SK-N-SH (cell line): ENCODE measurements at regions of chr15 and their contacts with region 1.

Region 1: GRCh38 chr15:79989682-79990081 is 18.7 kb upstream of the BCL2A1 start:
- DNase-seq: no peak
- H3K4me3 ChIP-seq: no peak overlapping the region
- H3K27ac ChIP-seq: no peak overlapping the region
- H3K4me1 ChIP-seq: no peaks in the 10 kb centered on the region; a peak in 1 of 4 replicates
- H3K27me3 ChIP-seq: no peaks in the 10 kb centered on the region; the same call in 1 of the 2 replicates
- CTCF ChIP-seq: no peak
- EP300 ChIP-seq: no peak
- RAD21 ChIP-seq: no peak

Region 2: DNA sequence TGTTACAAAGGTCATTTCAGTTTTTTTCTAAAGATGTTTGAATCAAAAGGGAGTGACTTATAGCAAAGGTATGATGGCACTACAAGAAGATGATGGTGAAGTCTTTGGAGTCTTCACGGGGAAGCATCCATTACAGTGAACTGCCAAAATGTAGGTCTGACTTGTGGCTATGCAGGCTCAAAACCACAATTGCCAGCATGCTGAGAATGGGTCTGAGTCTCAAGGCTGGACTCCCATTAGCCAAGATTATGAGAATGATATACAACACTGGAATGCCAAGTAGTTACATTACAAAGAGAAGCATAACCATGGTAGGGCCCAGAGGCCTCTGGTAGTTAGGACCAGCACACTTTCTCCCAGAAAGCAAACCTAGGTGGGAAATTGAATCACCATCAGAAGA is 287.1 kb before region 1 on chr15:
- CTCF ChIA-PET with region 1: no interaction called
- POLR2A ChIA-PET with region 1: no interaction called
- DNase-seq: no peak
- H3K4me3 ChIP-seq: no peak overlapping the region
- H3K27ac ChIP-seq: no peak overlapping the region
- H3K4me1 ChIP-seq: no peaks in the 10 kb centered on the region
- H3K27me3 ChIP-seq: no peaks in the 10 kb centered on the region
- CTCF ChIP-seq: no peak
- EP300 ChIP-seq: no peak
- RAD21 ChIP-seq: no peak

Region 3: DNA sequence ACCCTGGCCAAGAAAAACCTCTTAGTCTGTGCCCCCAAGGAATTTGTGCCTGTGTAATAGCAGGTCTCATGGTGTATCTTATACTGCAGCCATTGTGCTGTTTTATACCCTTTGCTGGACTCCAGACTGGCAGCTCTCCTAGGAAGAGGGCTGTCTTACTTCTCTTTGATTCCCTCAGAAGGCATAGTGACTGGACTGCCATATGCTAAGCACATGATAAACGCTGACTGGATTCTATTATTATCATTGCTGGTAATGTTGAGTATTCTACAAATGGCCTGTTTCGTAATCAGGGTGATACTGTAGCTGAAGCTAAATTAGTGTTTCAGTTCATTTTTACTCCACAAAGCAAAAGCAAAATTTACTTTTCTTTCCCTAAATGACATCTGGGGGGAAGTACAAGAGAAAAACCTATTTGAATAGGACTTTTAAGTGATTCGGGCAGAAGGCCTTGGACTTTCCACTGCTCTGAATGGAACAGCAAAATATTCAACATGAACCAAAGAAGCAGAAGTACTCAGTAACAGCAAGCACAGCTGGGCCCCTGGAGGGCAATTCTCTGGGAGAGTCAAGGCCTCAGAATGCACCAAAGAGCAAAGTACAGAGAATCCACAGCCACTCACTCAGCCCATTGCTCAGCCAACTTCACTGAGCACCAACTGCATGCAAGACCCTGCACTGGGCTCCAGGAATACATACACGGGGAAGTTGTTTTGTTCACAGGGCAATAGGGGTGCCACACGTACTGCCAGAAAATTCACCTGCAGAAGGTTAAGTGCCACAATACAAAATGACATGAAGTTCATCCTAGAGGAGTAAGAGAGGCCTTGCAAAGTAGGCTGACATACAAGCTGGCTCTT is 10.8 kb before region 1 on chr15:
- CTCF ChIA-PET with region 1: interaction called, 15 read pairs
- POLR2A ChIA-PET with region 1: no interaction called
- DNase-seq: no peak
- H3K4me3 ChIP-seq: no peak overlapping the region
- H3K27ac ChIP-seq: no peak overlapping the region
- H3K4me1 ChIP-seq: peaks cover 0 to 2% of the 10 kb centered on the region in 2 experiments; a peak in 1 of 4 replicates
- H3K27me3 ChIP-seq: no peaks in the 10 kb centered on the region
- CTCF ChIP-seq: no peak
- EP300 ChIP-seq: no peak
- RAD21 ChIP-seq: no peak